Heart right ventricle (tissue), 16 donors: ENCODE measurements at regions of chr7 and their contacts with region 1.

Region 1: DNA sequence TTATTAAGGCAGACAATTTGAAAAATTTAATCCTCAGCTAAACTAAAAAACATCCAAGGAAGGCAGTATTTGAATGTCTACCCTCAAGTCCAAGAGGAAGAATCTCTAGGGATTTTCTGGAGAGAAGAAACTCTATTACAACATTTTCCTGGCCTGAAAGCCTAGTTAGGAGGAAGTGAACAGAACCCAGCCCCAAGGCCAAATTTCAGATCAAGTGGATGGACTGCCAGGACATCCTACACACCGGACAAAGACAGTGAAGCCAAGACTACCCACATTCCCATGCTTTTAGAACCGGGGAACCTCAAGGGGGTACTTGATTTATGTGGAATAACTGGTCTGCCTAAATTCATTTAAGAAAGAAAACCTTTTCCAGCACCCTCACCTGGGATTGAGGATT is 108.9 kb upstream of the MEOX2 start:
- DNase-seq: peak in 1 of 2 donors; percentile 48
- ATAC-seq: peak; percentile 41 to 93 (median 78)
- H3K4me3 ChIP-seq: no peak overlapping the region
- H3K27ac ChIP-seq: peak overlapping the region in 6 of 10 donors; percentile 2 to 54 (median 45)
- H3K4me1 ChIP-seq: peaks cover 0 to 23% (median 7%) of the 10 kb centered on the region in 9 donors
- H3K27me3 ChIP-seq: no peaks in the 10 kb centered on the region
- CTCF ChIP-seq: no peak

Region 2: GRCh38 chr7:15461576-15461975 is 333.8 kb before region 1 on chr7:
- intact Hi-C with region 1: no loop called
- DNase-seq: no peak
- ATAC-seq: peak in 1 of 8 donors; percentile 62
- H3K4me3 ChIP-seq: no peak overlapping the region
- H3K27ac ChIP-seq: peak overlapping the region in 7 of 10 donors; percentile 25 to 80 (median 50)
- H3K4me1 ChIP-seq: peaks cover 2 to 70% (median 27%) of the 10 kb centered on the region in 9 donors
- H3K27me3 ChIP-seq: no peaks in the 10 kb centered on the region
- CTCF ChIP-seq: no peak

Region 3: DNA sequence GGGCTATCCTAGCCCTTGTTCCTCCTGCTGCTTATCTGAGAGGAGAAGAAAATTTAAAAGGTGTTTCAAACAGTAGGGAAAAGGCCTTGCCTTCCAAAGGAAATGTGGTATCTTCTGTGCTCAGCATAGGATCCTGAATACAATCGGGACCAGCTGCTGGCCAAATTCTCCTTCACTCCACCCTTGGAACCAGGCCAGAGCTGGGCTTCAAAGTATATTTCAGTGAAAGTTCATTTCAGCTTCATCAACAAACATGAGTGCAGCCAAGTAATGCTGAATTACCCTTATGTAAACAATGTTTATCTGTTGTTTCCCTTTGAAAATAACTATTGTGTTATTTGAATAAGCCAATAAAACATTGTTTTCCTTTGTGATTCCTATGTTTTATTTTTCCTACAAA is 37.6 kb after region 1 on chr7:
- intact Hi-C with region 1: loop called in 1 of 10 experiments (anchors 5 kb)
- DNase-seq: peak; percentile 60 to 74
- ATAC-seq: peak in 6 of 8 donors; percentile 28 to 70 (median 48)
- H3K4me3 ChIP-seq: no peak overlapping the region
- H3K27ac ChIP-seq: peak overlapping the region in 8 of 10 donors; percentile 2 to 61 (median 29)
- H3K4me1 ChIP-seq: peaks cover 0 to 51% (median 22%) of the 10 kb centered on the region in 9 donors
- H3K27me3 ChIP-seq: no peaks in the 10 kb centered on the region
- CTCF ChIP-seq: no peak